ENCODE measurements at regions of chr10 and their contacts with region 1.

Region 1: DNA sequence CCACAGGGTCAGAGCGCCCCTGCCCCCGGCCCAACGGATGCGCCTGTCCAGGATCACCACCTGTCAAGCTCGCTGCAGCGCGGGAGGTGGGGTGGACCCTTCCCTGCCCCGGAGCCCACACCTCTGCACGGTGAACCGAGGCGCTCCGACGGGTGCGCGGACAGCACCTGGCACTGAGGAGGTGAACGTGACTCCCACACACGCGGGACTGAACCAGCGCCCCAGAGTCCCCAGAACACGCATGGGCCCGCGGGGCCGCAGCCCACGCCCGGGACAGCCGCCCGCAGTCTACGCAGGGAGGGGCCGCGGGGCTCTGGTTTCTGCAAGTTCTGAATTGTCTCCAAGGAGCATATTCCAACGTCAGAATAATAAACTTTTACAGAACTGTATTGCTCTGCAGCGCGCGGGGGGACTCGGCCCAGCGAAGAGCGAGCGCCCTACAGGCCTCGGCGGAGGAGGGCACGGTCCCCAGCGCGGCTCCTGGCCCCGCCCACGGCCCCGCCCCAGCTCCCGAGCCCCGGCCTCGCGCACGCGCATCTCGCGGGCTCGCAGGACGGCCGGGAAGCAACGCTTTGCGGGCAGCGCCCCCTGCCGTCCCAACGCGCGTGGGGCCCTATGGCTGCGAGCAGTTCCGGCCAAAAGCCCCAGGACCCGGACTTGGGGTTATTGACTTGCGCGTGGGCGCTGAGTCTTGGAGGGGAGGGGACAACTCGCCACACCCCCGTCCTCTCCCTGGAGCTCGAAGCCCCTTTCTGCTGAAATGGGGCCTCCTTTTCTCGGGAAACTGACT is 29.7 kb downstream of the OAT start:
- DNase-seq: peak; percentile 84 to 95
- H3K4me3 ChIP-seq: peak overlapping the region; percentile 37
- H3K4me3 Mint-ChIP-seq: peak overlapping the region; percentile 46
- H3K27ac Mint-ChIP-seq: no peak overlapping the region
- H3K4me1 ChIP-seq: peaks cover 11% of the 10 kb centered on the region
- H3K4me1 Mint-ChIP-seq: peaks cover 5% of the 10 kb centered on the region
- H3K27me3 ChIP-seq: no peaks in the 10 kb centered on the region
- H3K27me3 Mint-ChIP-seq: no peaks in the 10 kb centered on the region
- CTCF ChIP-seq: peak; percentile 93 to 96

Region 2: DNA sequence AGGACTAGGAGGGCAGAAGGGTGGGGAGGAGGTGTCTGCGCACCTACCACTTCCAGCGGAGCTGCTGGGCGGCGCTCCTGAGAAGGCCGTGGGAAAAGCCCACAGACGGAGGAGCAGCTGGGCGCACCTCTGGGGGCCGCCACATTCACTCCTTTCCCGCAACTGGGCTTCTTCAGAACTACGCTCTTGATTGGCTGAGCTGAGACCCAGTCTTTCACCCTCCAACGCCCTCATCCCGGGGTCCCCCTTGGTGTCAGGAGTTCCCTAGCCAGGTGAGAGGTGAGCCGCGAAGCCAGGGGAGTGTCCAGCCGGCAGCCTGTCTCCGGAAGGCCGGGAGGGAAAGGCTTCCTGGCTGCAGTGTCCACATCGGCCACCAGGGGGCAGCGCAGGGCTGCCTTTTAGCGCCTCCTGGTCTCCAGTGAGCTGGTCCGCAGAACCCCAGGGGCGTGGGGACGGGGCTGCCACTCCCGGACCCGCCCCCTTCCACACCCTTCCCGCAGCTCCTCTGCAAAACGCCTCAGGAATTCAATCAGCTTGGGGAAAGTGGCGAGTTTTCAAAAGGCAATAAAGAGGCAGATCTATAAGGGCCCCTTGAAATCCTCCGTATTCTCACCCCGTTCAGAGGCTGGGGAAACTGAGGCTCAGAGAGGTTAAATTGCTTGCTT is 394.5 kb before region 1 on chr10:
- CTCF ChIA-PET with region 1: interaction called, 68 read pairs
- POLR2A ChIA-PET with region 1: interaction called, 5 read pairs
- intact Hi-C with region 1: loop called (anchors 1 kb)
- DNase-seq: peak; percentile 89 to 95
- H3K4me3 ChIP-seq: peak overlapping the region; percentile 5; the same call in 1 of the 2 replicates
- H3K4me3 Mint-ChIP-seq: peak overlapping the region; percentile 67
- H3K27ac Mint-ChIP-seq: no peak overlapping the region
- H3K4me1 ChIP-seq: peaks cover 9% of the 10 kb centered on the region; the same call in 1 of the 2 replicates
- H3K4me1 Mint-ChIP-seq: peaks cover 13% of the 10 kb centered on the region
- H3K27me3 ChIP-seq: no peaks in the 10 kb centered on the region
- H3K27me3 Mint-ChIP-seq: peaks cover 10% of the 10 kb centered on the region
- CTCF ChIP-seq: peak; percentile 96 to 97

Region 3: DNA sequence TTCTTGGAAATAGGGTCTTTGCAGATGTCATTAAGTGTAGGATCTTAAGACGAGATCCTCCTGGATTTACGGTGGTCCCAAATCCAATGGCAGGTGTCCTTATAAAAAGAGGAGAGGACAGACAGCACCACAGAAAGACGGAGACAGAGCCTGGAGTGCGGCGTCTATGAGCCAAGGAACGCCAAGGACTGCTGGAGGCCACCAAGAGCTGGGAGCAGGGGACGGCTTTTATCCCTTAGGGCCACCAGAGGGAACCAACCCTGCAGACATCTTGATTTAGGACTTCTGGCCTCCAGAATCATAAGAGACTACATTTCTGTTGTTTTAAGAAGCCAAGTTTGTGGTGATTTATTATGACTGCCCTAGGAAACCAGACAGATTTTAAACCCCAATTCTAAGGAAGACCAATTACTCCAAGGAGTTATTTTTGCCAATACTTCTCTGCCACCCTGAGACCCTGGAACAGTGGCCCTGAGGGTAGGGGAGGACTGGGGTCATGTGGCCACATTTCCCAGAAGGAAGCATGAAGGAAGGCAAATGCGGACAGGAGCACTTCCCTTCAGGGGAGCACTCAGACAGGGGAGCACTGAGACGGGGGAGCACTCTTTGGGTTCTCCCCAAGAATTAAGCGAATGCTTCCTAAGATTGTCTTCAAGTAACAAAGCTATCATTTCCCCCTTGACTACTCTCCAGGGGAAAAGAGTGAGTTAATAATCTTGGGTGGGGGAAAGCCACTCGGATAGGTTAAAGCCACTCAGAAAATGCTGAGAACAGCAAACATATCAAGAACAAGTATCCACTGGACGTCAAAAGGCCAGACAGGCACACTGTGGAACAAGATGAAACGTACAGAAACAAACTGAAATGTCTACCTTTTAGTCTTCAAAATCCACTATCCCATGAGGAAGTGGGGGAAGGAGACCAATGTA is 363.1 kb before region 1 on chr10:
- CTCF ChIA-PET with region 1: interaction called, 11 read pairs
- POLR2A ChIA-PET with region 1: no interaction called
- intact Hi-C with region 1: no loop called
- DNase-seq: peak in 1 of 2 experiments; percentile 39
- H3K4me3 ChIP-seq: no peak overlapping the region
- H3K4me3 Mint-ChIP-seq: no peak overlapping the region
- H3K27ac Mint-ChIP-seq: no peak overlapping the region
- H3K4me1 ChIP-seq: no peaks in the 10 kb centered on the region
- H3K4me1 Mint-ChIP-seq: no peaks in the 10 kb centered on the region
- H3K27me3 ChIP-seq: no peaks in the 10 kb centered on the region
- H3K27me3 Mint-ChIP-seq: peaks cover 2% of the 10 kb centered on the region
- CTCF ChIP-seq: peak; percentile 29 to 71

Region 4: DNA sequence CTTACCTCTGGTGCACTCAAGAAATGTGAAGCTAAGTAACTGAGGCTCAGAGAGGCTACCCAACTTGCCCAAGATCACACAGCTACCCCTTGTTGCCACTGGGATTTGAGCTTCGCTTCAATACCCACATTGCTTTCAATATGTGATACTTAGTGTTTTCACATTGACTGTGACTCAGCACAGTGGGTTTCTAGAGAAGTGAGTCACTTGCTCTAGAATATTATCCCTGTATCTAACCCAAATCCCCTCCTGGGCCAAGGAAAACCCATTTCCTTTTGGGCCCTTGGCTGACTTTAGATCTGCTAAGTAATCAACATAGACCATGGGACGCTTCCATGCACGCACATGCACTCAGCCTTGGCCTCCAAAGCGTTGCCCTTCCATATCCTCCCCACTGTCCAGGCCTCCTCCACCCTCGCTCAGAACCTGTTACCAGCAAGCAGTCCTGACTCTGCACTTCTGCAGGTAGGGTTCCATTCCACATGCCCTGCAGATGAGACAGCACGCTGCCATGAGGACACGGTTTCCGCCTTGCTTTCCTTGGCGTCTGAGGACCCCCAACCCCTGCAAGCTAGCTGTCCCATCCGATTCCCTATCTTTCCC is 208.0 kb before region 1 on chr10:
- CTCF ChIA-PET with region 1: no interaction called
- POLR2A ChIA-PET with region 1: no interaction called
- intact Hi-C with region 1: no loop called
- DNase-seq: no peak
- H3K4me3 ChIP-seq: no peak overlapping the region
- H3K4me3 Mint-ChIP-seq: no peak overlapping the region
- H3K27ac Mint-ChIP-seq: no peak overlapping the region
- H3K4me1 ChIP-seq: no peaks in the 10 kb centered on the region
- H3K4me1 Mint-ChIP-seq: no peaks in the 10 kb centered on the region
- H3K27me3 ChIP-seq: no peaks in the 10 kb centered on the region
- H3K27me3 Mint-ChIP-seq: no peaks in the 10 kb centered on the region
- CTCF ChIP-seq: no peak

Region 5: DNA sequence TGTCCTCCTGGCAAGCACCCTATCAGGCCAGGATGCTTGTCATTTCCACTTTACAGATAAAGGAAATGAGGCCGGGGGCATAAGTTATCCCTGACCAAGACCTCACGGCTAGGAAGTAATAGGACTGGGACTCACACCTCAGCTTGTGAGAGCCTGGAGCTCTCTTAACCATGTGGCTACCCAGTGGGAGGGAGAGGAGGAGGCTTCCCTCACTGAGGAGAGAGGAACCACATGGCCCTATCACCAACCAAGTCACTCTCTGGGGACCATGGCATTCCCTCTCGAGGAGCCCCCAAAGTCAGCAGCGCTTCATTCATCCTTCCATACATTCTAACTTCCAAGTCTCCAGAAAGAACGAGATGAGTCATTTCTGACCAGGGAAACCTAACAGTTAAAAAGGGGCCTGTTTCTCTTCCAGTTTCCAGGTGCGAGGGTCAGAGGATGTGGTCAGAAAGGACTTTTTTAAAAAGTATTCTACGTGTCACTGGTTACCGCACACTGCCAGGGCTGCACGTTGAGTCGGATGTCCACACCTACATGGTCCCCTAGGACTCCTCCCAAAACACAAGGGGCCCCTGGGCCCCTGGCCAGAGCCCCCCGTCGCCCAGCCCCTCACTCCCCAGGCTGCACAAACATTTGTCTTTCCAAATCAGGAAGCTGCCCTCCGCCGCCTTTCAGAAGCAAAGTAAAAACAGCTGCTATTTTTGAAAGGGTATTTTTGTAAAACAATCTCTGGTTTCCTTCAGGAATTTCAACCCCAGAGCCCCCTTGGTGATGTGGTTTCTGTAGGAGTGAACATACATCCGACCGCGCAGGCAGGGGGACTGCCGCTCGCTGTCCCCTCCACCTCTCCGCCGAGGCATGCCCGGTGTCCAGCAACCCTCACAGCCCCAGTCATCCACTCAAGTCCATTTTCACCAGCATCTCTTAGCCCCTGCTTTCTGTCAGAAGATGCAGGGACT is 167.4 kb before region 1 on chr10:
- CTCF ChIA-PET with region 1: no interaction called
- POLR2A ChIA-PET with region 1: no interaction called
- intact Hi-C with region 1: no loop called
- DNase-seq: no peak
- H3K4me3 ChIP-seq: no peak overlapping the region
- H3K4me3 Mint-ChIP-seq: no peak overlapping the region
- H3K27ac Mint-ChIP-seq: no peak overlapping the region
- H3K4me1 ChIP-seq: no peaks in the 10 kb centered on the region
- H3K4me1 Mint-ChIP-seq: no peaks in the 10 kb centered on the region
- H3K27me3 ChIP-seq: peaks cover 2% of the 10 kb centered on the region; the same call in 1 of the 2 replicates
- H3K27me3 Mint-ChIP-seq: peaks cover 14% of the 10 kb centered on the region
- CTCF ChIP-seq: no peak

Region 6: GRCh38 chr10:124279882-124280281 is 109.1 kb before region 1 on chr10:
- CTCF ChIA-PET with region 1: no interaction called
- POLR2A ChIA-PET with region 1: no interaction called
- intact Hi-C with region 1: loop called (anchors 5 kb)
- DNase-seq: no peak
- H3K4me3 ChIP-seq: no peak overlapping the region
- H3K4me3 Mint-ChIP-seq: no peak overlapping the region
- H3K27ac Mint-ChIP-seq: no peak overlapping the region
- H3K4me1 ChIP-seq: no peaks in the 10 kb centered on the region
- H3K4me1 Mint-ChIP-seq: no peaks in the 10 kb centered on the region
- H3K27me3 ChIP-seq: no peaks in the 10 kb centered on the region
- H3K27me3 Mint-ChIP-seq: peaks cover under 1% of the 10 kb centered on the region
- CTCF ChIP-seq: no peak

Region 7: GRCh38 chr10:124296121-124296812 is 92.8 kb before region 1 on chr10:
- CTCF ChIA-PET with region 1: interaction called, 14 read pairs
- POLR2A ChIA-PET with region 1: no interaction called
- intact Hi-C with region 1: no loop called
- DNase-seq: peak; percentile 21 to 38
- H3K4me3 ChIP-seq: no peak overlapping the region
- H3K4me3 Mint-ChIP-seq: no peak overlapping the region
- H3K27ac Mint-ChIP-seq: no peak overlapping the region
- H3K4me1 ChIP-seq: no peaks in the 10 kb centered on the region
- H3K4me1 Mint-ChIP-seq: peaks cover 5% of the 10 kb centered on the region
- H3K27me3 ChIP-seq: no peaks in the 10 kb centered on the region
- H3K27me3 Mint-ChIP-seq: no peaks in the 10 kb centered on the region
- CTCF ChIP-seq: peak in 1 of 2 experiments; percentile 6

Region 8: GRCh38 chr10:124403548-124403947 is 14.5 kb after region 1 on chr10:
- CTCF ChIA-PET with region 1: interaction called, 19 read pairs
- POLR2A ChIA-PET with region 1: no interaction called
- intact Hi-C with region 1: no loop called
- DNase-seq: peak in 1 of 2 experiments; percentile 71
- H3K4me3 ChIP-seq: no peak overlapping the region
- H3K4me3 Mint-ChIP-seq: no peak overlapping the region
- H3K27ac Mint-ChIP-seq: peak overlapping the region; percentile 73
- H3K4me1 ChIP-seq: no peaks in the 10 kb centered on the region
- H3K4me1 Mint-ChIP-seq: no peaks in the 10 kb centered on the region
- H3K27me3 ChIP-seq: no peaks in the 10 kb centered on the region
- H3K27me3 Mint-ChIP-seq: no peaks in the 10 kb centered on the region
- CTCF ChIP-seq: peak; percentile 36 to 57